CD8-positive, alpha-beta T cell (primary cell): ENCODE measurements at regions of chr9 and their contacts with region 1.

Region 1: DNA sequence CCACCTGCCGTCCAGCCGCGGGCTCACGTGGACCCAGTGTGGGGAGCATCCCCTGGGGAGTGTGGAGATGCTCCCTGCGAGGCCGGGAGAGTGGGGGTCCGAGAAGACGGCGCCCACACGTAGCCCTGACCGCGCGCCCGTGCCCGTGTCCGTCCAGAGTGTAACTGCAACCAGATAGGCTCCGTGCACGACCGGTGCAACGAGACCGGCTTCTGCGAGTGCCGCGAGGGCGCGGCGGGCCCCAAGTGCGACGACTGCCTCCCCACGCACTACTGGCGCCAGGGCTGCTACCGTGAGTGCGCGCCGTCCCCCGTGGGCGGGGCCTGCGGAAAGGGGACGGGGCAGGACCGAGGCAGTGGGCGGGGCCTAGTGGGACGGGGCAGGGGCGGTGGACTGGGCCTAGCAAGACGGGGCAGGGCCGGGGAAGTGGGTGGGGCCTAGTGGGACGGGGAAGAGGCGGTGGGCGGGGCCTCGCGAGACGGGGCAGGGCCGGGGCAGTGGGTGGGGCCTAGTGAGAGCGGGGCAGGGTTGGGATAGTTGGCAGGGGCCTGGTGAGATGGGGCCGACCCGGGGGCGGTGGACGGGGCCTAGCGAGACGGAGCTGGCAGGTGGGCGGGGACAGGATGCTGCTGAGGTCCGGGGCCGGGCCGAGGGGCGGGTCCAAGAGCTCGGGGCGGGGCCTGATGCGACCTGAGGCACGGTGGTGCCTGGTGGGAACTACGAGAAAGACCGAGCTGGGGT is 79.1 kb downstream of the NTNG2 start:
- DNase-seq: peak; percentile 98 to 100 (median 99)
- ATAC-seq: peak; percentile 87
- H3K4me3 ChIP-seq: peak overlapping the region; percentile 67 to 94
- H3K4me3 Mint-ChIP-seq: peak overlapping the region; percentile 97
- H3K27ac ChIP-seq: peak overlapping the region in 1 of 2 experiments; percentile 45
- H3K27ac Mint-ChIP-seq: peak overlapping the region; percentile 80
- H3K4me1 ChIP-seq: peaks cover 20% of the 10 kb centered on the region
- H3K4me1 Mint-ChIP-seq: peaks cover 13% of the 10 kb centered on the region
- H3K27me3 ChIP-seq: peaks cover 0 to under 1% of the 10 kb centered on the region in 2 experiments
- H3K27me3 Mint-ChIP-seq: peaks cover 3% of the 10 kb centered on the region
- CTCF ChIP-seq: no peak

Region 2: DNA sequence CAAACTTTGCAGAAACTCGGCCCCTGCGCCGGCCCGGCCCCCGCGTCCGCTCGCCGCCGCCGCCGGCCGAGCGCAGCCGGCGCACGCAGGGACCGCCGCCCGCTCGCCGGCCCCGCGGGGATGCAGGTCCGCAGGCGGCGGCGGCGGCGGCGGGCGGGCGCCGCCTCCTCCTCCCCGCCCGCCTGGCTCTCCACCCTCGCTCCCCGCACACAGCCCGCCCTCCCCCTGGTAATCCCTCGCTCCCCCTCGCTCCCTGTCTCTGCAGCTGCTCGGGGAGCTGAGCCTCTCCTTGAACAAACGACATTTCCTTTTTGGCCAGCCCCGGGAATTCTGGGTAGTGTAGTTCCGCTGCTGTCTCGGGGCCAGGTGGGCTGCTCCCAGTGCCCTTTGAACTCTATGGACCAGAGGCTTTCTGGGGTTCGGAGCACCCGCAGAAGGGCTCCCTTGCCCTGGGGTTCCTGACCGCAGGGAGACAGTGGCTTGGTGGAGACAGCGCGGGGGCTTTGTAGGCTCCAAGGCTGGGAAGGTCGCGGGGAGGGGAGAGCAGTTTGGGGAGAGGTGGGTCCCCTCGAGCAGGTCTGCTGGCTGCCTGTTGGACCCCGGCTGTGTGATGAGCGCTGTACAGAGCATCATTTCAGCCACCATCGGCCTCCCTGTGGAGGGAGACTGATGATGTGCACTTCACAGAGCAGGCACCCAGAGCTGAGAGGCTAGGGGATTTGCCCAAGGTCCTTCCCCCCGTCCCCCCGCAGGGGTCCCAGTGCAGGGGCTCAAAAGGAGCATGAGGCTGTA is 962.8 kb before region 1 on chr9:
- CTCF ChIA-PET with region 1: no interaction called
- POLR2A ChIA-PET with region 1: no interaction called
- intact Hi-C with region 1: loop called in 1 of 2 experiments (anchors 5 kb)
- DNase-seq: peak; percentile 43 to 89 (median 72)
- ATAC-seq: peak; percentile 51
- H3K4me3 ChIP-seq: peak overlapping the region; percentile 45 to 49
- H3K4me3 Mint-ChIP-seq: peak overlapping the region; percentile 90
- H3K27ac ChIP-seq: peak overlapping the region; percentile 48 to 84
- H3K27ac Mint-ChIP-seq: peak overlapping the region; percentile 90
- H3K4me1 ChIP-seq: peaks cover 26% of the 10 kb centered on the region
- H3K4me1 Mint-ChIP-seq: peaks cover 30% of the 10 kb centered on the region
- H3K27me3 ChIP-seq: peaks cover 0 to 3% of the 10 kb centered on the region in 2 experiments
- H3K27me3 Mint-ChIP-seq: no peaks in the 10 kb centered on the region
- CTCF ChIP-seq: no peak

Region 3: GRCh38 chr9:131755541-131756198 is 485.3 kb before region 1 on chr9:
- CTCF ChIA-PET with region 1: interaction called, 100 read pairs
- POLR2A ChIA-PET with region 1: interaction called, 3 read pairs
- intact Hi-C with region 1: no loop called
- DNase-seq: peak; percentile 73 to 91 (median 89)
- ATAC-seq: peak; percentile 100
- H3K4me3 ChIP-seq: no peak overlapping the region
- H3K4me3 Mint-ChIP-seq: no peak overlapping the region
- H3K27ac ChIP-seq: no peak overlapping the region
- H3K27ac Mint-ChIP-seq: no peak overlapping the region
- H3K4me1 ChIP-seq: peaks cover 7% of the 10 kb centered on the region
- H3K4me1 Mint-ChIP-seq: peaks cover 6% of the 10 kb centered on the region
- H3K27me3 ChIP-seq: no peaks in the 10 kb centered on the region
- H3K27me3 Mint-ChIP-seq: peaks cover 6% of the 10 kb centered on the region
- CTCF ChIP-seq: peak; percentile 87

Region 4: DNA sequence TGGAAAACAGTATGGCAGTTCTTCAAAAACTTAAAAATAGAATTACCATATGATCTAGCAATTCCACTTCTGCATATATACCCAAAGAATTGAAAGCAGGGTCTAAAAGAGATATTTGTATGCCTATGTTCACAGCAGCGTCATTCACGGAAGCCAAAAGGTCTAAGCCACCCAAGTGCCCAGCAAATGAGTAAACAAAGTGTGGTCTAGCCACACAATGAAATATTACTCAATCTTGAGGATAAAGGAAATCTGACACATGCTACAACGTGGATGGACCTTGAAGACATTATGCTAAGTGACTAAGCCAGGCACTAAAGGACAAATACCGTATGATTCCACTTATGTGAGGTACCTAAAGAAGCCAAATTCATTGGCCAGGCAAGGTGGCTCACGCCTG is 150.2 kb before region 1 on chr9:
- CTCF ChIA-PET with region 1: no interaction called
- POLR2A ChIA-PET with region 1: no interaction called
- intact Hi-C with region 1: no loop called
- DNase-seq: no peak
- ATAC-seq: no peak
- H3K4me3 ChIP-seq: no peak overlapping the region
- H3K4me3 Mint-ChIP-seq: no peak overlapping the region
- H3K27ac ChIP-seq: no peak overlapping the region
- H3K27ac Mint-ChIP-seq: no peak overlapping the region
- H3K4me1 ChIP-seq: no peaks in the 10 kb centered on the region
- H3K4me1 Mint-ChIP-seq: no peaks in the 10 kb centered on the region
- H3K27me3 ChIP-seq: no peaks in the 10 kb centered on the region
- H3K27me3 Mint-ChIP-seq: peaks cover 32% of the 10 kb centered on the region
- CTCF ChIP-seq: no peak

Region 5: DNA sequence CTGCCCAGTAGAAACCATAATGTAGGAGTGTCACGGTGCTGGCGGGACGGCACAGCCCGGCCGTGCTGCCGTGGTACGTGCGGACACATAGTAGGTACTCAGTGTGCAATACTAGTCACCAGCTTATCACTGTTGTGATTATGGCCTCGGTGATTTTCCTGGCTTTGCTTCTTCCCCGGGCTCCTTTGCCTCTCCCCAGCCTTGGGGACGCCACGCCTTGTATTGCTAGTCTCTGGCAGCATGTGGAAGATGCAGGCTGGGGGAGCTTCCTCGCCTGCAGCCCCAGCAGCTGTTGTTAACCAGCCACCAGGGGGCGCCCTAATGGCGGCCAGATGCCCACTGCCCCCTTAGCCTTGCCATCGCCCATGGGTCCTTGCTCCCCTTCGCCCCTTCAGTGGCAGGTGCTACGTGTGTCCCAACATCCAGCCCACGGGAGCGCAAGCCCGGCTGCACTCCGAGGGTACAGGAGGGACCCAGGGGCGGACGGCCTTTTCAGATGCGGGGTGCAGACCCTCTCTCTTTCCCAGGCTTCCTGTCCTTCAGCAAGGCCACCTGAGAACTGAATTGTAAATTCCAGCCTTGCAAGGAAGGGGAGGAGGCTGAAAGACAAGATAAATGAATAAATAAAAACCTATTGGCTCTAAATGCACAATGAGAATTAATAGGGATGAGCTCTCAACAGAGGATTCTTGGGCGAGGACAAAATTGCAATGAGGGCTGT is 71.1 kb before region 1 on chr9:
- CTCF ChIA-PET with region 1: interaction called, 134 read pairs
- POLR2A ChIA-PET with region 1: interaction called, 3 read pairs
- intact Hi-C with region 1: loop called in 1 of 2 experiments (anchors 1 kb)
- DNase-seq: peak; percentile 13 to 74 (median 59)
- ATAC-seq: peak; percentile 64
- H3K4me3 ChIP-seq: no peak overlapping the region
- H3K4me3 Mint-ChIP-seq: no peak overlapping the region
- H3K27ac ChIP-seq: no peak overlapping the region
- H3K27ac Mint-ChIP-seq: no peak overlapping the region
- H3K4me1 ChIP-seq: no peaks in the 10 kb centered on the region
- H3K4me1 Mint-ChIP-seq: no peaks in the 10 kb centered on the region
- H3K27me3 ChIP-seq: no peaks in the 10 kb centered on the region
- H3K27me3 Mint-ChIP-seq: peaks cover 34% of the 10 kb centered on the region
- CTCF ChIP-seq: peak; percentile 77

Region 6: GRCh38 chr9:132301521-132301920 is 60.6 kb after region 1 on chr9:
- CTCF ChIA-PET with region 1: no interaction called
- POLR2A ChIA-PET with region 1: no interaction called
- intact Hi-C with region 1: no loop called
- DNase-seq: no peak
- ATAC-seq: no peak
- H3K4me3 ChIP-seq: no peak overlapping the region
- H3K4me3 Mint-ChIP-seq: no peak overlapping the region
- H3K27ac ChIP-seq: no peak overlapping the region
- H3K27ac Mint-ChIP-seq: no peak overlapping the region
- H3K4me1 ChIP-seq: no peaks in the 10 kb centered on the region
- H3K4me1 Mint-ChIP-seq: peaks cover 25% of the 10 kb centered on the region
- H3K27me3 ChIP-seq: no peaks in the 10 kb centered on the region
- H3K27me3 Mint-ChIP-seq: no peaks in the 10 kb centered on the region
- CTCF ChIP-seq: no peak

Region 7: DNA sequence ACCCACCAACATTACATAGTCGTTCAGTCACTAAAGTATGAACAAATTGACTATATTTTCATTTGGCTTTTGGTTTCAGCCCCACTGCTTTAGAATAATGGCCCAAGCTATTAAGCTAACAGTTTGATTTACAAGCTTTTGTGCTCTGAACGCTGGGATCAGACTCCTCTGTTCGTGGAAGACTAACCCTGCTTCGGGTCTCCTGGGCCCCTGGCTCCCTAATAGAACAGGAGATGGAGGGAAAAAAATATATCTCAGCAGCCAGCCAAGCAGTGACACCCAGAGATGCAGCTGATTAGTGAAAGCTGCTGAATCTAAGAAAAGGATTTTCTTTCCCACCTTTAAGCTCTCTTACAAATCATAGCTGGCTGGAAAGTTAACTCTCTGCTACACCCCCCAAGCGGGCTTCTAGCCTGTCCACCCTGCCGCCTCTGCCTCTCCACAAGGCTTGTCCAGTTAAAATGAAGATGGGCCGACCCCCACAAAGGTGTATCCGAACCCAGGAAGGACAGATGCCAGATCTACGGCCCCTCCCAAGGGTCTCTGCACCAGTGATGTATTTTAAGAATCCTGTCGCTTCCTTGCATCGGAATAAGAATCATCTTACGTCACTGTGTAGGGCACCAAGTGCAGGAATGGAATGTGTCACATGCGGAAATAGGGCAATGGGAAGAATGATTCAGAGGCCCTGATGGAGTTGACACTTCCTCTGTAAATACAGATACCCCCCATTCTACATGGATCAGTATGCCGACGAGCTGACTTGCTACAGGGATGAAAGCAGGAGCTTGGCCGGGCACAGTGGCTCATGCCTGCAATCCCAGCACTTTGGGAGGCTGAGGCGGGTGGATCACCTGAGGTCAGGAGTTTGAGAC is 308.1 kb after region 1 on chr9:
- CTCF ChIA-PET with region 1: no interaction called
- POLR2A ChIA-PET with region 1: no interaction called
- intact Hi-C with region 1: no loop called
- DNase-seq: no peak
- ATAC-seq: no peak
- H3K4me3 ChIP-seq: no peak overlapping the region
- H3K4me3 Mint-ChIP-seq: no peak overlapping the region
- H3K27ac ChIP-seq: no peak overlapping the region
- H3K27ac Mint-ChIP-seq: no peak overlapping the region
- H3K4me1 ChIP-seq: peaks cover 8% of the 10 kb centered on the region
- H3K4me1 Mint-ChIP-seq: no peaks in the 10 kb centered on the region
- H3K27me3 ChIP-seq: peaks cover 0 to 2% of the 10 kb centered on the region in 2 experiments
- H3K27me3 Mint-ChIP-seq: peaks cover 14% of the 10 kb centered on the region
- CTCF ChIP-seq: no peak

Region 8: GRCh38 chr9:132669698-132670456 is 429.0 kb after region 1 on chr9 and contains the start of gene DDX31:
- CTCF ChIA-PET with region 1: no interaction called
- POLR2A ChIA-PET with region 1: no interaction called
- intact Hi-C with region 1: loop called in 1 of 2 experiments (anchors 2 kb)
- DNase-seq: peak; percentile 79 to 94 (median 88)
- ATAC-seq: peak; percentile 77
- H3K4me3 ChIP-seq: peak within 1 kb of the TSS; percentile 100
- H3K4me3 Mint-ChIP-seq: peak within 1 kb of the TSS; percentile 91
- H3K27ac ChIP-seq: peak within 1 kb of the TSS; percentile 98 to 99
- H3K27ac Mint-ChIP-seq: peak within 1 kb of the TSS; percentile 97
- H3K4me1 ChIP-seq: peaks cover 22% of the 10 kb centered on the region
- H3K4me1 Mint-ChIP-seq: peaks cover 63% of the 10 kb centered on the region
- H3K27me3 ChIP-seq: no peaks in the 10 kb centered on the region
- H3K27me3 Mint-ChIP-seq: no peaks in the 10 kb centered on the region
- CTCF ChIP-seq: no peak
- total RNA-seq, gene DDX31: 14.1 to 15.6 TPM

Region 9: DNA sequence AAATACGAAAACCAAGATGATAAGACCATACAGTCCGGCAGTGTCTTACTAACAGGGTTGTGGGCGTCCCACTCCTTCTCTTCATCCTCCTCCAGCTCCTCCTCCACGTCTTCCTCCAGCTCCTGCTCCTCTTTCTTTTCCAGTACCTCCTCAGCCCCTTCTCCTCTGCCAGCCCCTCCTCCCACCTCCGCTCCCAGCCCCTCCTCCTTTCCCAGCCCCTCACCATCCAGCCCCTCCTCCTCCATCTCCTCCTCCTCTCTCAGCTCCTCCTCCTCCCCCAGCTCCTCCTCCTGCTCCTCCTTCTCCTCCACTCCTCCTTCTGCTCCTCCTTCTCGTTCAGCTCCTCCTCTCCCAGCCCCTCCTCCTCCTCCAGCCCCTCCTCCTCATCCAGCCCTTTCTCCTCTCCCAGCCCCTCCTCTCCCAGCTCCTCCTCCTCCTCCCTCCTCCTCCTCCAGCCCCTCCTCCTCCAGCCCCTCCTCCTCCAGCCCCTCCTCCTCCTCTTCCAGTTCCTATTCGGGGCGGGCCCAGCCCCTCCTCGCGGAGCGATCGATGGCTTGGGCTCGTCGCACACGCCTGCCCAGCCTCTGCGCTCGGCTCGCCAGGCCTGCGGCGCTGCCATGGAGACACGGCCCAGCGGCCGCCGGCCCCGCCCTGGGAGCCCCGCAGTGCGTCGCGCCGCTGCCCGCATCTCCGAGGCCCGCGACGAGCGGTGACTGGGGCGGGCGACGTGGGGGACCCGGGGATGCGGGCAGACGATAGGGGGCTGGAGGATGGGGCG is 1784.1 kb after region 1 on chr9 and contains the start of gene BRD3OS:
- CTCF ChIA-PET with region 1: no interaction called
- POLR2A ChIA-PET with region 1: no interaction called
- intact Hi-C with region 1: loop called in 1 of 2 experiments (anchors 10 kb)
- DNase-seq: peak; percentile 81 to 98 (median 90)
- ATAC-seq: peak; percentile 96
- H3K4me3 ChIP-seq: peak within 1 kb of the TSS; percentile 71 to 92
- H3K4me3 Mint-ChIP-seq: peak within 1 kb of the TSS; percentile 80
- H3K27ac ChIP-seq: peak within 1 kb of the TSS; percentile 56 to 65
- H3K27ac Mint-ChIP-seq: peak within 1 kb of the TSS; percentile 45
- H3K4me1 ChIP-seq: peaks cover 11% of the 10 kb centered on the region
- H3K4me1 Mint-ChIP-seq: peaks cover 11% of the 10 kb centered on the region
- H3K27me3 ChIP-seq: no peaks in the 10 kb centered on the region
- H3K27me3 Mint-ChIP-seq: no peaks in the 10 kb centered on the region
- CTCF ChIP-seq: no peak
- total RNA-seq, gene BRD3OS: 3.3 to 4.2 TPM